Activated T-helper 2 cell treated with anti-CD3 and anti-CD28 coated beads, Interferon-gamma antibody, Interleukin-2, Interleukin-4, amounts not matched to agents 10 μg/mL and 5 μg/mL and 100 μg/mL, durations not matched to agents 14 hours and 24 hours and 36 hours (primary cell): ENCODE measurements at regions of chr3 and their contacts with region 1.

Region 1: GRCh38 chr3:119637679-119638525 is 22.5 kb downstream of the POPDC2 start:
- DNase-seq: no peak
- H3K4me3 Mint-ChIP-seq: peak overlapping the region; percentile 18
- H3K27ac Mint-ChIP-seq: peak overlapping the region; percentile 86
- H3K4me1 Mint-ChIP-seq: peaks cover 42% of the 10 kb centered on the region
- H3K27me3 Mint-ChIP-seq: peaks cover 1% of the 10 kb centered on the region

Region 2: DNA sequence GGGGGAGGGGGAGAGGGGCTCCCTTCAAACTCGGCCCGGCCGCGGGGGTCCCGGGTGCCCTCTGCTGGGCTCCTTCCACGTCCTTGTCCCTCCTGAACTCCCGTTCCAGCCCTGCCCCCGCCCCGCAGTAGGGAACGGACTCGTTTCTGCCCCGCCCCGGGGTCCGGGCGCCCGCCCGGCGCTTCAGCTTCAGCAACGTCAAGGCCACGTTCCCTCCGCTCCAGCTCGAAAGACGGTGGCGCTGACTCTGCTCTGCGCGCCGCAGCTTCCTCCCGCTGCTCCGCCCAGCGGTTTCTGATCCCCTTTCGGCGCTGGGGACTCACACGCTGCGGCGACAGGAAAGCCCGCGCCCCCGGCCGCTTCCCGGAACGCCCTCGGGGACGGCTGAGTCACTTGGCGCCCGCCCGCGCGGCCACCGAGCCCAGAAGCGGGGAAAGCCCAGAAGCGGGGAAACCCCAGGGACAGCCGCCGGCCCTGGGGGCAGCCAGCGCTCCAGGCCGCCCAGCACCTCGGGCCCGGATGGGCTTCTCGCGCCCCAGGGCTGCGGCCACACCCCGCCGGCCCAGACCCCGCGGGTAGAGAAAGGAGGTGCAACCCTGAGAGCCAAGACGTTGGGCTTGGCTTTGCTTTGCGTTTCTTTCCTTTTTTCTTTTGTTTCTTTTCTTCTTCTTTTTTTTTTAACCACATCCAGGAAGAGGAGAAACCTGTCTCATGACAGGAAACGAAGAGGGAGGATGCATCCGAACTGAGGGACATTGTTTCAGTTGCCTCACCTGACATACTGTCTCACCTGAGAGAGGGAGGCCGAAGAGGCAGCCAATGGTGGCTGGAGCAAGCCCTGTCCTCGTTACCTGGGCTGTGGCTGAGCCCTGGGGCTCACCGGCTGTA is 314.8 kb before region 1 on chr3:
- intact Hi-C with region 1: loop called (anchors 1 kb)
- DNase-seq: peak; percentile 87
- H3K4me3 Mint-ChIP-seq: peak overlapping the region; percentile 77
- H3K27ac Mint-ChIP-seq: peak overlapping the region; percentile 83
- H3K4me1 Mint-ChIP-seq: peaks cover 47% of the 10 kb centered on the region
- H3K27me3 Mint-ChIP-seq: peaks cover 2% of the 10 kb centered on the region

Region 3: DNA sequence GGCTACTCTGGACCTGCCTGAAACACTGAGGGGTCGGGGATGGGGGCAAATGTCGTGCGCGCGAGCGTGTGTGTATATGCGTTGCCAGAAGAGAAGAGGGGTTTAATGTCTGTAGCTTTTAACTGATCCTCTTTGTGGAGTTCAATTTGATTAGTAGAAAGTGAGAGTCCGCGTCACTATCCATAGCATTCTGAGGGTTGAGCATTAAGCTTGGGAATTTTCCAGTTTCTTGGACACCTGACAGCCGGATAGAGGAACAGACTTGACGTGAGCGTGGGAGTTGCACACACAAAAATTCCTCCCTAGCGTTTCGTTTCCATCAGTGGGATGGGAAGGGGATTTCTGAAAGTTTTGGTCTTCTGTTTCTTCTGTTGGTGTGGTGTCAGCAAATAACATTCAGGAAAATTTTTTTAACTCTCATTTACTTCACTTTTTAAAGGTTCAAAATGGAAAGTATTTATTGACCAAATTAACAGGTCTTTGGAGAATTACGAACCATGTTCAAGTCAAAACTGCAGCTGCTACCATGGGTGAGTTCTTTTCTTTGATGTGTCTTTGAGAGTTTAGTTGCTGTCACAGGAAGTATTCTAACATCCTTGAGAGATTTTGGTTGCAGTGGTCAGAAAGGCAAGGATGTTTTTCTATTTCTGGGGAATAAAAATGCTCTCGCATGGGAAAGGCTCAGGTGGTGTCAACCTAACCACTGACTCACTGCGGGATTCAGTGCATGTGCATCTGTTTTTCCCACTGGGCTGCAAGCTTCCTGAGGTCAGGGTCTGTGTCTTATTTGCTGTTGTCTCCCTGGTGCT is 168.3 kb before region 1 on chr3:
- intact Hi-C with region 1: loop called (anchors 1 kb)
- DNase-seq: no peak
- H3K4me3 Mint-ChIP-seq: peak overlapping the region; percentile 92
- H3K27ac Mint-ChIP-seq: peak overlapping the region; percentile 88
- H3K4me1 Mint-ChIP-seq: peaks cover 26% of the 10 kb centered on the region
- H3K27me3 Mint-ChIP-seq: no peaks in the 10 kb centered on the region

Region 4: GRCh38 chr3:119508172-119508845 is 129.6 kb before region 1 on chr3:
- intact Hi-C with region 1: loop called (anchors 2 kb)
- DNase-seq: peak; percentile 22
- H3K4me3 Mint-ChIP-seq: no peak overlapping the region
- H3K27ac Mint-ChIP-seq: peak overlapping the region; percentile 76
- H3K4me1 Mint-ChIP-seq: peaks cover 39% of the 10 kb centered on the region
- H3K27me3 Mint-ChIP-seq: no peaks in the 10 kb centered on the region

Region 5: DNA sequence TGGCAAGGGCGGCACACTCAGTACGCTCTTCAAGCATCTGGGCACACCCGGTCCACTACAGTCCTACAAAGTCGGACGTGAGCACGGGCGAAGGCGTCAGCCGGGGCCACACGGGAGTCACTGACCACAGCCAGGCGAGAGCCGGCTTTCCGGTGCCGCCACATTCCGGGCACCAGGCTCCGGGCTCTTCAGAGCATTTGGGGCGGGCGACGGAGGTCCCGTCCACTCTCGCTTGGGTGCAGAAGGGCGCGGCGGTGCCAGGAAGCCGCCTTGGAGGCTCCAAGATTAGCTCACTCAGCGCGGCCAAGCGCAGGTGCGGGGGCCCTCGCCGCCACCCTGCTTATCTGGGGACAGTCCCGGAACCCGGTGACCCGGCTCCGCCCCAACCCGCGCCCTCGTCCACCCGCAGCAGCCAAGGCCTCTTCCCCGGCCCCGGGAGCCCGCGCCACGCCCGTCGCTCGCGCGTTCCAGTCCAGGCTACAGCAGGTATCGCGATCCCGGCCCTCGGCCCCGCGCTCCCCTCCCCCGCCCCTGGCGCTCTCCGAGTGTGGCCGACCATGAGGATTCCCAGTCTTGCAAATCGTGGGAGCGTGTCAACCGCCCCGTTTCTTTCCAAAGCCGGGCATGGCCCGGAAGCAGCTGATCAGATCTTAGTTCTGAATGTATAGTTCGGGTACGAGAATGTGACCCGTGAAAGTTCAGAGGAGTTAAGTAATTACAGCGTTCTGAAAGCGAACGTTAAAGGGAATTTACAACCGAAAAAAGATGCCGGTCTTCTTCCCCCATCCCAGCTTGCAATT is 58.3 kb before region 1 on chr3 and contains the start of gene ADPRH:
- intact Hi-C with region 1: loop called (anchors 10 kb)
- DNase-seq: peak; percentile 44
- H3K4me3 Mint-ChIP-seq: peak within 1 kb of the TSS; percentile 84
- H3K27ac Mint-ChIP-seq: peak within 1 kb of the TSS; percentile 85
- H3K4me1 Mint-ChIP-seq: peaks cover 25% of the 10 kb centered on the region
- H3K27me3 Mint-ChIP-seq: no peaks in the 10 kb centered on the region
- total RNA-seq, gene ADPRH: 5.5 and 6.3 TPM in 2 replicates

Region 6: DNA sequence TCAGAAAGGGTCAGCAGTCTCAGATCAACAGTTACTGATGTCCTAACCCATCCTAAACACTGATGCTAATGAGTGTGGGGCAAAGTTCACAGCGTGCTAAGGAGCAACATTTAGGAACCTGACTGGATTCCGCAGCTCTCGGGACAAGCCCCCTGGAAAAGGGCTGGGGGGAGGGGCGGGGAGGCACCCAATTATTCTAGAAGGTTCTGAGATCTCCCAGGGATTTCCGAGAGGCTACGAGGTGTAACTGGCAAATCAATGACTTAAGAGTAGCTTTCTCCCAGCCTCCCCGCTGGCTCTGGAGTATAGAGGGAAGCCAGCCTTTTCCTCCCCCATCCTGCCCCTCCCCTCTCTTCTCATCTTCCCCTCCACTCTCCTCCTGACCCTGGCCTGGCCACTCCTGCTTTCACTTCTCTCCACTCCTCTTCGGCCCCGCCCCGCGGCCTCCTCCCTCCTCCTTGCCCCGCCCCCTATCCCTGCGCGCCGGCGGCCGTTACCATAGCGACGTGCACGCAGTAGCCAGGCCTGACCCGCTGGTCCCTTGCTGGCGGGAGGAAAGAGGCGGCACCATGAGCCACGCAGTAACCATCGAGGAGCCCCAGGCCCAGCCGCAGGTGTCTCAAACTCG is 64.7 kb after region 1 on chr3 and contains the start of gene CFAP91:
- intact Hi-C with region 1: loop called (anchors 2 kb)
- DNase-seq: peak; percentile 74
- H3K4me3 Mint-ChIP-seq: peak within 1 kb of the TSS; percentile 71
- H3K27ac Mint-ChIP-seq: no peak within 1 kb of the TSS
- H3K4me1 Mint-ChIP-seq: peaks cover 29% of the 10 kb centered on the region
- H3K27me3 Mint-ChIP-seq: peaks cover 26% of the 10 kb centered on the region
- total RNA-seq, gene CFAP91: not detected in 2 replicates

Region 7: DNA sequence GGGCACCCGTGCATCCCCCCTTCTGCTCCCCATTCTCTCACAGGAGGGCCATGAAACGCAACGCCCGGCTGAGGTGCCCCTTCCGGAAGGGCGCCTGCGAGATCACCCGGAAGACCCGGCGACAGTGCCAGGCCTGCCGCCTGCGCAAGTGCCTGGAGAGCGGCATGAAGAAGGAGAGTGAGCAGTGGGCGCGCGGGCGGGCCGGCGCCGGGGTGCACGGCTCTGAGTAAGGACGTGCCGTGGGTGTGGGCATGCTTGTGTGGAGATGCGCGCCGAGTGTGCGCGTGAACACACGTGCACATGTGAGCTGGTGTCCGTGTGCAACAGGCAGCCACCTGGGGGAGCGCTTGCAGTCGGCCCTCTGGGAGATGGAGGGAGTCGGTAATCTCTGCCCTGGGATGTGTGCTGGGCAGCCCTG is 172.1 kb after region 1 on chr3:
- intact Hi-C with region 1: no loop called
- DNase-seq: peak; percentile 16
- H3K4me3 Mint-ChIP-seq: peak overlapping the region; percentile 71
- H3K27ac Mint-ChIP-seq: peak overlapping the region; percentile 64
- H3K4me1 Mint-ChIP-seq: peaks cover 6% of the 10 kb centered on the region
- H3K27me3 Mint-ChIP-seq: peaks cover 11% of the 10 kb centered on the region